Right lobe of liver (tissue), 6 donors: ENCODE measurements at regions of chr7 and their contacts with region 1.

Region 1: DNA sequence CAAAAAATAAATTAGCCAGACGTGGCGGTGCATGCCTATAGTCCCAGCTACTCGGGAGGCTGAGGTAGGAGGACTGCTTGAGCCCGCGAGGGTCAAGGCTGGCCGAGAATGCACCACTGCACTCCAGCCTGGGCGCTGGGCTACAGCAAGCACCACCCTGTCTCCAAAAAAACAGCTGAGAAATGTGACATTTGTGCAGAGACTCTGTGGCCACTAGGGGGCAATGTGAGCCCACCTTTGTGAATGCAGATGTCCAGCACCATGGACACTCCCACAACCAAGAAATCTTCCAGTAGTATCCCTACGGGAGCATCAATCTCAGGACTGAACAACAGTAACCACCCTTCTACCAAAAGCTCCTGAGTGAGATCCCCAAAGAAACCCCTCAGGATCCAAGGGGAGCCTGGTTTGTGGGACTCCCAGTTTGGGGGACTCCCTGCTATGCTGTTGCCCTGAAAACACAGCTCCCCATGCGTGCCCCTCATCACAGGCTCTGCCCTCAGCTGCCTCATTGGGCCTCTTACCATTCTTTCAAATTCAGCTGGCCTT is 6.2 kb upstream of the AHCYL2 start:
- DNase-seq: peak; percentile 76 to 87 (median 83)
- ATAC-seq: peak; percentile 95 to 98 (median 97)
- H3K4me3 ChIP-seq: no peak overlapping the region
- H3K27ac ChIP-seq: no peak overlapping the region
- H3K4me1 ChIP-seq: peaks cover 0 to 6% (median 0%) of the 10 kb centered on the region in 4 donors
- H3K27me3 ChIP-seq: no peaks in the 10 kb centered on the region
- CTCF ChIP-seq: peak; percentile 92 to 96 (median 94)
- POLR2A ChIP-seq: no peak

Region 2: GRCh38 chr7:129298268-129298893 is 79.8 kb after region 1 on chr7:
- intact Hi-C with region 1: loop called (anchors 5 to 10 kb)
- DNase-seq: peak in 2 of 3 donors; percentile 58 to 63
- ATAC-seq: peak; percentile 65 to 82 (median 80)
- H3K4me3 ChIP-seq: no peak overlapping the region
- H3K27ac ChIP-seq: no peak overlapping the region
- H3K4me1 ChIP-seq: no peaks in the 10 kb centered on the region
- H3K27me3 ChIP-seq: no peaks in the 10 kb centered on the region
- CTCF ChIP-seq: peak; percentile 74 to 85 (median 81)
- POLR2A ChIP-seq: no peak